ENCODE measurements at regions of chr6 and their contacts with region 1.

Region 1: GRCh38 chr6:148166339-148166968 is 176.2 kb upstream of the SASH1 start:
- DNase-seq: no peak
- H3K4me3 Mint-ChIP-seq: no peak overlapping the region
- H3K27ac Mint-ChIP-seq: no peak overlapping the region
- H3K4me1 Mint-ChIP-seq: no peaks in the 10 kb centered on the region
- H3K27me3 Mint-ChIP-seq: no peaks in the 10 kb centered on the region

Region 2: GRCh38 chr6:147382945-147383554 is 783.4 kb before region 1 on chr6:
- intact Hi-C with region 1: loop called (anchors 10 kb)
- DNase-seq: no peak
- H3K4me3 Mint-ChIP-seq: no peak overlapping the region
- H3K27ac Mint-ChIP-seq: no peak overlapping the region
- H3K4me1 Mint-ChIP-seq: peaks cover 7% of the 10 kb centered on the region
- H3K27me3 Mint-ChIP-seq: no peaks in the 10 kb centered on the region

Region 3: DNA sequence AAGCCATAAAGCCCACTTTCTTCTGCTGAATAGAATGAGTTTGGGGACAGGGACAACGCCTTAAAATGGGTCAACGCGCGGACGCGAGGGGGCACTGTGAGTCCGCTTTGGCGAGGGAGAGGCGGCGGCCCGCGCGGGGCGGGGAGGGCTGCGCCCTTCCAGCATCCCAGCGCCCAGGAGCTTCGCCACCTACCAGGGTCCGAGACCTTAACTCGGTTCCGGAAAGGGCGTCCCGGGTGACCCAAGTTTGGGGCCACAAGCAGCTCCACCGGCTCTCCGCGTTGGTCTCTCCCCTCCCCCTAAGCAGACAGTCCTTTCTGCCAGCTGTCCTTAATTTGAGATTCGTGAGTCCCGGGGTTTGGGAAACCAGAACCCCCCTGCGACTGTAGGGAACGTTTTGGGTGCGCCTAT is 659.7 kb before region 1 on chr6:
- intact Hi-C with region 1: loop called (anchors 1 kb)
- DNase-seq: no peak
- H3K4me3 Mint-ChIP-seq: peak overlapping the region; percentile 57
- H3K27ac Mint-ChIP-seq: no peak overlapping the region
- H3K4me1 Mint-ChIP-seq: peaks cover 7% of the 10 kb centered on the region
- H3K27me3 Mint-ChIP-seq: peaks cover 43% of the 10 kb centered on the region

Region 4: DNA sequence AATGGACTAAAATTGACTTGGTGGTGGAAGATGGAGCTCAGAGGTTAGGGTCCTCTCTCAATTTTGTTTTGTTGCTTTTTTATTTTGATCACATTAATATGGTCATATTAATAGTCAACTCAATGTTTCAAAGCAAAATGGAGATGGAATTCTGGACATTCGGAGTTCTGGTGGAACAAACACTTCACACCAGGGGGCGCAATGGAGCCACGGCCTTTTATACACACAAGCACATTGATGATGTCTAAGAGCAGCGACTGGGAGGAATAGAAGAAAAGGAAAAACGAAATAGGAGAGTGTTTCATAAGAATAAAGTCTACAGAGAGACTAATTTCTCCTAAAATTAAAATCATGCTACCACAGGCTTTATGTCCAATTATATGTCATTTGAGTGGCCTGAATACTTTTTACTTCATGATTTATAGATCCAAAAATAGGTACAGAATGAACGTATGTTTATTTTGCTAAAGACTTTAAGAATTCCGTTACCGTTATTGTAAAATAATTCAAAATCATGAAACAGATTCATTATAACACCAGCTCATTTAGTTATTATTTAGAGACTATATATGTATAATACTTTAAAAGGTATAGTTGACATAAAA is 21.4 kb before region 1 on chr6:
- intact Hi-C with region 1: loop called (anchors 1 kb)
- DNase-seq: peak; percentile 15
- H3K4me3 Mint-ChIP-seq: no peak overlapping the region
- H3K27ac Mint-ChIP-seq: no peak overlapping the region
- H3K4me1 Mint-ChIP-seq: peaks cover 8% of the 10 kb centered on the region
- H3K27me3 Mint-ChIP-seq: no peaks in the 10 kb centered on the region

Region 5: DNA sequence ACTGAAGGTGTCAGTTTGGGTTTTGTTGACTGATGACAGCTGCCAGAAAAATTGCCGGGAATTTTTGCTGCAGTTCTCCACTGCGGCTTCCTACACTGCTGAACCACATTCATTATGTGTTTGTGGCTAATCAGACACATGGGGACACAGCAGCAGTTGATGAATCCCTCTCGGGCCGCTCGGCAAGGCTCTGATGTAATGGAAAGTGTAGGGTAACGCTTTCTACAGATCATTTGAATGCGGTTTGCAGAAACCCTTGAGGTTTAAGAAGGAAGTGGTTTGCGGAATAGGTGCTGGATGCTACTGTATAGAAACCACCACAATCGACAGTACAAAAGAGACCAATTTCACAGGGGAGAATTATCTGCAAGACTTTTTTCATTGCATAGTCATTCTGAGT is 37.5 kb after region 1 on chr6:
- intact Hi-C with region 1: no loop called
- DNase-seq: peak; percentile 65
- H3K4me3 Mint-ChIP-seq: peak overlapping the region; percentile 12
- H3K27ac Mint-ChIP-seq: peak overlapping the region; percentile 91
- H3K4me1 Mint-ChIP-seq: peaks cover 27% of the 10 kb centered on the region
- H3K27me3 Mint-ChIP-seq: peaks cover 70% of the 10 kb centered on the region

Region 6: GRCh38 chr6:148271711-148272439 is 105.4 kb after region 1 on chr6:
- intact Hi-C with region 1: no loop called
- DNase-seq: no peak
- H3K4me3 Mint-ChIP-seq: no peak overlapping the region
- H3K27ac Mint-ChIP-seq: no peak overlapping the region
- H3K4me1 Mint-ChIP-seq: no peaks in the 10 kb centered on the region
- H3K27me3 Mint-ChIP-seq: no peaks in the 10 kb centered on the region

Region 7: GRCh38 chr6:149534742-149535141 is 1368.3 kb after region 1 on chr6:
- intact Hi-C with region 1: no loop called
- DNase-seq: no peak
- H3K4me3 Mint-ChIP-seq: no peak overlapping the region
- H3K27ac Mint-ChIP-seq: no peak overlapping the region
- H3K4me1 Mint-ChIP-seq: peaks cover 5% of the 10 kb centered on the region
- H3K27me3 Mint-ChIP-seq: no peaks in the 10 kb centered on the region

Measured in activated T-helper 1 cell treated with anti-CD3 and anti-CD28 coated beads, Interleukin-12 subunit alpha, Interleukin-12 subunit beta, Interleukin-2, Interleukin-4 antibody, amounts not matched to agents 30 ng/mL and 10 ng/mL and 1 ng/mL, durations not matched to agents 14 hours and 24 hours and 36 hours (primary cell).